Activated CD4-positive, alpha-beta T cell treated with anti-CD3 and anti-CD28 coated beads for 36 hours (primary cell): ENCODE measurements at regions of chr4 and their contacts with region 1.

Region 1: GRCh38 chr4:100093091-100093866 is 97.0 kb downstream of the DDIT4L start:
- DNase-seq: peak; percentile 94
- ATAC-seq: peak; percentile 94
- H3K4me3 Mint-ChIP-seq: peak overlapping the region; percentile 33
- H3K27ac Mint-ChIP-seq: peak overlapping the region; percentile 94
- H3K4me1 Mint-ChIP-seq: peaks cover 56% of the 10 kb centered on the region
- H3K27me3 Mint-ChIP-seq: peaks cover 1% of the 10 kb centered on the region

Region 2: GRCh38 chr4:99949034-99949998 is 144.0 kb before region 1 on chr4:
- CTCF ChIA-PET with region 1: interaction called, 11 read pairs
- POLR2A ChIA-PET with region 1: interaction called, 3 read pairs
- intact Hi-C with region 1: loop called in 1 of 2 experiments (anchors 2 kb)
- DNase-seq: peak; percentile 96
- ATAC-seq: peak; percentile 52
- H3K4me3 Mint-ChIP-seq: no peak overlapping the region
- H3K27ac Mint-ChIP-seq: no peak overlapping the region
- H3K4me1 Mint-ChIP-seq: peaks cover 33% of the 10 kb centered on the region
- H3K27me3 Mint-ChIP-seq: no peaks in the 10 kb centered on the region

Region 3: DNA sequence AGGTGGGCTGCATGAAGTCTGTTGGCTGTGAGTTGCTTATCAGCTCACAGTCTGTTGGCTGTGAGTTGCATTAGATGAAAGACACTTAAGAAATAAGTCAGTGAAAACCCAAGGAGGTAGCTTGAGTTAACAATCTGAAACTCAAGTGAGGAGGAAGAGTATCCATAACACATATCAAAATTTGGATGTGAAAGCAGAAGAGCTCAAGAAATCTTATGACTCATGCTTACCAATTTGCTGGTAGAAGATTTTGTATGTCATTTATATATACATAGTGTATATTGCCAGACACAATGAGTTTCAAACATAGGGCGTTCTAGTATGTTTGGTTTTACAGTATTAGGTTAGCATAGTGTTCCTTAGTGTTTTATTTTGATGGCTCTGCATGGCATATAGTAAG is 10.4 kb before region 1 on chr4:
- CTCF ChIA-PET with region 1: interaction called, 56 read pairs
- POLR2A ChIA-PET with region 1: interaction called, 9 read pairs
- intact Hi-C with region 1: no loop called
- DNase-seq: no peak
- ATAC-seq: peak; percentile 73
- H3K4me3 Mint-ChIP-seq: no peak overlapping the region
- H3K27ac Mint-ChIP-seq: peak overlapping the region; percentile 81
- H3K4me1 Mint-ChIP-seq: peaks cover 52% of the 10 kb centered on the region
- H3K27me3 Mint-ChIP-seq: peaks cover 3% of the 10 kb centered on the region

Region 4: GRCh38 chr4:100742045-100742444 is 648.8 kb after region 1 on chr4:
- CTCF ChIA-PET with region 1: no interaction called
- POLR2A ChIA-PET with region 1: no interaction called
- intact Hi-C with region 1: loop called in 1 of 2 experiments (anchors 2 kb)
- DNase-seq: no peak
- ATAC-seq: no peak
- H3K4me3 Mint-ChIP-seq: no peak overlapping the region
- H3K27ac Mint-ChIP-seq: no peak overlapping the region
- H3K4me1 Mint-ChIP-seq: no peaks in the 10 kb centered on the region
- H3K27me3 Mint-ChIP-seq: no peaks in the 10 kb centered on the region

Region 5: DNA sequence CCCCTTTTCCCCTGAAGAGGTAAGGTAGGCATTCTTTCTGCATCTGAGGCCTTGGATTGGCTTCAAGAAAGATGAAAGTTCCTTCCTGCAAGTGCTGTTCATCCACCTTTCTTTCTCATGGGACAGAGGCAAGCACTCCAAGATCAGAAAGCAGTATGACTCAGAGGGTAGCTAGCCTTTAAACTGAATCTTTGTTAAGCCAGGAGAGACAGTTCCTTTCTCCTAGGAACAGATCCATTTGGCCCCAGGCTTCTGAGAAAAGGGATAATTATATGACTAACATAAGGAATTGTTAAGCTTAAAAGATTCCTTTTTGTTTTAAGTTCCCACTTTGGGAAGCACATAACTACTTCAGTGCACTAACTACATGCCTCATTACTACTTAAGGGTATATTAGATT is 1062.1 kb after region 1 on chr4:
- CTCF ChIA-PET with region 1: interaction called, 4 read pairs
- POLR2A ChIA-PET with region 1: no interaction called
- intact Hi-C with region 1: loop called (anchors 10 kb)
- DNase-seq: no peak
- ATAC-seq: no peak
- H3K4me3 Mint-ChIP-seq: no peak overlapping the region
- H3K27ac Mint-ChIP-seq: no peak overlapping the region
- H3K4me1 Mint-ChIP-seq: peaks cover 36% of the 10 kb centered on the region
- H3K27me3 Mint-ChIP-seq: no peaks in the 10 kb centered on the region

Region 6: DNA sequence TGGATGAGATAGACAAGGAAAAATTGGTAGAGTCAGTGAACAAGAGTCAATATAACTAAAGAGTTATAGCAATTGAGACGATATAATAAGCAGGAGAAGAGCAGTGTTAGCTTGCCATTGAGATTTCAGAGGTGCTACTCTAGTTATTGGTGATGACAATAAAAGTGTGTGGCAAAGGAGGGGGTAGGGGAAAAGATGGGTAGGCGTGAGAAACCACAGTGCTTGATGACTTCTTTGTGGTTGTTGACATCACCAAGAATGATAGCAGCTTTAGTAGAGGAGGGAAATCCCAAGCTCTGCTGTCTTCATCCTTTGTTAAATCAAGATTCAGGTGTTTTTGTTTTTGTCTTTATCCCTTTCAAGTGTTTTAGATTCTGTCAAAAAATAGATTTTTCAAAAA is 1433.9 kb after region 1 on chr4:
- CTCF ChIA-PET with region 1: no interaction called
- POLR2A ChIA-PET with region 1: no interaction called
- intact Hi-C with region 1: loop called in 1 of 2 experiments (anchors 10 kb)
- DNase-seq: peak; percentile 84
- ATAC-seq: peak; percentile 100
- H3K4me3 Mint-ChIP-seq: no peak overlapping the region
- H3K27ac Mint-ChIP-seq: no peak overlapping the region
- H3K4me1 Mint-ChIP-seq: peaks cover 19% of the 10 kb centered on the region
- H3K27me3 Mint-ChIP-seq: peaks cover 47% of the 10 kb centered on the region